ENCODE measurements at regions of chr12 and their contacts with region 1.

Region 1: DNA sequence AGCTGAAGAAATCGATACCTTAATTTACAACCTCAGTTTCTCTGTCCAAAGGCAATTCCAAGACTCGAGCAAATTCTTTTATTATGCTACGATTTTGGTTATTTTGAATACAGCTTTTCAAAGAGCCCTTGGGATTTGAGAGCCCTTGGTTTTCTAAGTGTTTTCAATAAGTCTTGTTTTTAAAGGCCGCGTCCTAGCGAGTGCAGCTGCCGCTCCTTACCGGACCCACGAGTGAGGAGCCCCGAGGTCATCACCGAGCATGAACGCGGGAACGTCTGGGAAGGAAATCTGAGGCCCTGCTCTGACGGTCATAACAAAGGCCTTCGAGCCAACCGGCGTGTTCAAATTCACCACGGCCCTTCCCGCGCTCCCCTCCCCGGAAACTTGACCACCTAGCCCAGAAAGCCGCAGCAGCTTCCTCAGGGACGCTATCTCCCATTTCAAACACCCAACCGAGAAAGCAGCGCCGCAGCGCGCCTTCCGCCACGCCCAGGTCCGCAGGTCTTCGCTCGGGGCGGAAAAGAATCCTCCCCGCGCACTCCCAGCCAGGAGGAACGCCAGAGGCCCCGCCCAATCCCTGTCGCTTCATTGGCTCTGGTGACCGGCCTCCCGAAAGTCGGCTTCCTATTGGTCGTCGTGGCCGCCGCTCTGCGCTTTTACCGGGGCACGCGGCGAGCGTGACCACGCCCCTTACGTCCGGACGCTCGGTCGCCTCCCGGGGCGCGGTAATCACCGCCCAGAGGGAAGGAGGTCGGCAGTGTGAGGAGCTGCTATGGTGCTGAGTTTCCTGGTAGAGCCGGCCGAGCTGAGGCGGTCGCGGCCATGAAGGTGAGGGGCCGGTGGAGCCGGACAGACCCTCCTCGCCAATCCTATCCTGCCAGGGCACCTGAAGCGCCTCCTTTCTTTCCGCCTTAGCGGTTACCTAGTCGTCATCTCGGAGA is at the start of gene RNF34:
- DNase-seq: peak; percentile 88
- ATAC-seq: peak; percentile 94
- H3K4me3 ChIP-seq: peak within 1 kb of the TSS; percentile 95
- H3K27ac ChIP-seq: peak within 1 kb of the TSS; percentile 93
- H3K4me1 ChIP-seq: no peaks in the 10 kb centered on the region; the same call in 1 of the 2 replicates
- H3K27me3 ChIP-seq: no peaks in the 10 kb centered on the region
- CTCF ChIP-seq: no peak
- EP300 ChIP-seq: no peak
- POLR2A ChIP-seq: peak; percentile 99
- RAD21 ChIP-seq: no peak
- polyA plus RNA-seq, gene RNF34: 111 to 121 TPM

Region 2: GRCh38 chr12:120783197-120783596 is 616.5 kb before region 1 on chr12:
- CTCF ChIA-PET with region 1: no interaction called
- POLR2A ChIA-PET with region 1: no interaction called
- RAD21 ChIA-PET with region 1: no interaction called
- SMC1A ChIA-PET with region 1: no interaction called
- in situ Hi-C with region 1: no loop called
- intact Hi-C with region 1: no loop called
- DNase-seq: no peak
- ATAC-seq: no peak
- H3K4me3 ChIP-seq: no peak overlapping the region
- H3K27ac ChIP-seq: no peak overlapping the region
- H3K4me1 ChIP-seq: no peaks in the 10 kb centered on the region
- H3K27me3 ChIP-seq: no peaks in the 10 kb centered on the region
- CTCF ChIP-seq: no peak
- EP300 ChIP-seq: no peak
- POLR2A ChIP-seq: no peak
- RAD21 ChIP-seq: no peak

Region 3: DNA sequence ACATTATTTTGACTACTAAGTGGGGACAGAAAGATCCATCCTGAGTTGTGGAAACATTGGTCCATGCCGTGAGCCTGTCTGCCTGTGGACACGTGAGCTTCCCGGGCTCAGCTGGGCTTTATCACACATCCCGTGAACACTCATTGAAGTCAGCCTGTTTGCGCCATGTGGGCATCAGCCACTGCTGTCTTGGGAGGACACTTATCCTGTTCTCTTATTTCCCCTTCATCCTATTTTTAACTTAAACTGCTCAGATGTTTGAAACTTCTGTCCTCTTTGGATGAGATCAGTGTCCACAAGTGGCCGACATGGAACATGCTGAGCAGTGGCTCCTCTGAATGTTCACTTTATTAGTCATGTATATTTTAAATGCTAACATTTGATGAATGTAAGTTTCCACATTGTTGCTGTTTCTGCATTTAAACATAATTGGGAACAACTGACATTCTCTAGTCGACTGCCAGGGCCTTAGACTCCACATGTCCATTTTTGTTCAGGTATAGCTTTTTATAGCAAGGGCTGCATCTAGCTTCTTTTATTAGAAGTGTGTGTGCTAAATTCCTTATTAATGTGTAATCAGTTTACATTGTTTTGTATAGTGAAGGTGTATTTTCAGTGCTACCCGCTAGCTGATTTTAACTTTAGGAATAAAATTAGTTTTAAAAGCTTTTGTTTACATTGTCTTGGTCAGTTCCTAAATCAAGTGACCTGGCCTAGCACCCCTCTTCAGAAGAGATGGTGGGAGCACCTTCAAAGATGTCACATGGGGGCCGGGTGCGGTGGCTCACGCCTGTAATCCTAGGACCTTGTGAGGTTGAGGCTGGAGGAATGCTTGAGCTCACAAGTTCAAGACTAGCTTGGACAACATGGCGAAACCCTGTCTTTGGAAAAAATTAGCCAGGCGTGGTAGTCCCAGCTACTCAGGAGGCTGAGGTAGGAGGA is 24.3 kb after region 1 on chr12:
- CTCF ChIA-PET with region 1: interaction called, 5 read pairs
- POLR2A ChIA-PET with region 1: interaction called, 9 read pairs
- RAD21 ChIA-PET with region 1: interaction called, 13 read pairs
- SMC1A ChIA-PET with region 1: interaction called, 46 read pairs
- in situ Hi-C with region 1: no loop called
- intact Hi-C with region 1: no loop called
- DNase-seq: no peak
- ATAC-seq: no peak
- H3K4me3 ChIP-seq: no peak overlapping the region
- H3K27ac ChIP-seq: 0 out of 2 replicates have a peak overlapping the region, but pooled peaks have one; percentile 6
- H3K4me1 ChIP-seq: peaks cover 22% of the 10 kb centered on the region
- H3K27me3 ChIP-seq: no peaks in the 10 kb centered on the region
- CTCF ChIP-seq: no peak
- EP300 ChIP-seq: no peak
- POLR2A ChIP-seq: no peak; the same call in 1 of the 2 replicates
- RAD21 ChIP-seq: no peak

Measured in GM12878 (cell line).